ENCODE measurements at regions of chr11 and their contacts with region 1.

Region 1: GRCh38 chr11:2298795-2299761 is 2.6 kb downstream of the C11orf21 start:
- DNase-seq: peak in 6 of 9 experiments; percentile 45 to 75 (median 66)
- ATAC-seq: peak; percentile 51
- H3K4me3 ChIP-seq: peak overlapping the region; percentile 43 to 85
- H3K4me3 Mint-ChIP-seq: peak overlapping the region; percentile 90
- H3K27ac ChIP-seq: peak overlapping the region; percentile 80 to 81
- H3K27ac Mint-ChIP-seq: peak overlapping the region; percentile 92
- H3K4me1 ChIP-seq: peaks cover 47% of the 10 kb centered on the region
- H3K4me1 Mint-ChIP-seq: peaks cover 64% of the 10 kb centered on the region
- H3K27me3 ChIP-seq: no peaks in the 10 kb centered on the region
- H3K27me3 Mint-ChIP-seq: no peaks in the 10 kb centered on the region
- CTCF ChIP-seq: no peak

Region 2: DNA sequence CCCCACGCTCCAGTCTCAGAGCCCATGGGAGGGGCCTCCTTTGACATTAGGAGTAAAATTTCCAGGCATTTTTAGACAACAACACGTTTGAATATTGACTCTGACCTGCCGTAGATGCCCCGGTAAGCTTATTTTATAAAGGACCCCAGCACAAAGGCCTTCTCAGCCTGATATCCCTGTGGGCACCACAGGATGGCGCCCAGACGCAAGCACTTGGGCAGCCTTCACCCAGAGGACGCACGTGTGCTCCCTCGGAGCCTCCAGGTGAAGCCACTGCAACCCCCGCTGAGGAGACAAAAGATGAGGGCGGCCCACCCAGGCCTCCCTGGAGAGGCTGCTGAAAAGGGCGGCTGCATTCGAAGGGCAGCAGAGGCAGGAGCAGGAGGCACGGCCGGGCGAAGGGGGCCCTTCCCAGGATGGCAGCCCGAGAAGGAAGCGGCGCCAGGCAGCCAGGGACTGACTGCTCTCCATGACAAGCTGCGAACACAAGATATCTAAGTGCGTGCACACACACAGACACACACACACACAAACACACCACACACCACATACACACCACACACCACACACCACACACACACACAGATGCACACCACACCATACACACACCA is 112.3 kb before region 1 on chr11:
- CTCF ChIA-PET with region 1: interaction called, 65 read pairs
- POLR2A ChIA-PET with region 1: no interaction called
- intact Hi-C with region 1: loop called in 1 of 2 experiments (anchors 1 kb)
- DNase-seq: peak; percentile 32 to 78 (median 52)
- ATAC-seq: peak; percentile 97
- H3K4me3 ChIP-seq: no peak overlapping the region
- H3K4me3 Mint-ChIP-seq: no peak overlapping the region
- H3K27ac ChIP-seq: no peak overlapping the region
- H3K27ac Mint-ChIP-seq: no peak overlapping the region
- H3K4me1 ChIP-seq: peaks cover 5% of the 10 kb centered on the region
- H3K4me1 Mint-ChIP-seq: peaks cover 5% of the 10 kb centered on the region
- H3K27me3 ChIP-seq: peaks cover 0 to 10% of the 10 kb centered on the region in 2 experiments
- H3K27me3 Mint-ChIP-seq: peaks cover 14% of the 10 kb centered on the region
- CTCF ChIP-seq: peak; percentile 67

Region 3: DNA sequence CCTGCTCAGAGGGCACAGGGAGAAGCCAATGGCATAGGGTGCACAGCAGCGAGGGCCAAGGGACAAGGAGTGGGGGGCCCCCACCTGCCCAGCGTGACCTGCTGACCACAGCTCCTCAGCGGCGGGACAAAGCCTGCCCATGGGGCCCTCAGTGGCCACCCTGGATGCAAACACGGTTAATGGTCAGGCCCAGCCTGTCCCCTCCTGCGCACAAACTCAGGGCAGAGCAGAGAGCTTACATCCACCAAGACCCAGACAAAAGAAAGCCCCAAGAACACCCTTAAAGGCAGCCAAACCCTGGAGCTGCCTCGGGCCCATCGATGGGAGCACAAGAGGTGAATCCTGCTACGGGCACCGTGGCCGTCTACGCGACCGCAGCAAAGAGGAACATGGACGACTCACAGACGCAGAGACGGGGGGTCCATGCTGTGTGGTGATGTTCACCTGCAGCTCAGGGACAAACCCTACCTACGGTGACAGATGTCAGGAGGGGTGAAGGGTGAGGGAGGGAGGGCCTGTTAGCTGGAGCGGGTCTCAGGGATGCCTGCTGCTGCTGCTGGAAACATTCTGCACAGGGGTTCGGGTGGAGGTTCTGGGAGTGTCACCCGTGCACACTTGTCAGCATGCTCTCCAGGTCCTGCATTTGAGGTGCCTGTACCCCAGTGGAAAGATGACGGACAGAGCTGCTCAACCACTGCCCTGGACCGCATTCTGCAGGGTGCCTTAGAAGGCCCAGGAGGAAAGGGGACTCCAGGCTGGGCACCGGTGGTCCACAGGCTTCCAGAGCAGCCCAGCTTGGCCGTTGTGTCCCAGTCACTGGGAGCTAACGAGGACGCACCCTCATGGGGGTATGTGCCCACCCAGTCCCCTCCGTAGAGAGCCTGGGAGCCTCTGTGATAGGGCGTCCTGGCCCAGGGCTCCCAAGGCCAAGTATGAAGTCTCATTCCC is 40.3 kb before region 1 on chr11:
- CTCF ChIA-PET with region 1: no interaction called
- POLR2A ChIA-PET with region 1: no interaction called
- intact Hi-C with region 1: no loop called
- DNase-seq: peak in 2 of 9 experiments; percentile 8 to 40
- ATAC-seq: no peak
- H3K4me3 ChIP-seq: no peak overlapping the region
- H3K4me3 Mint-ChIP-seq: no peak overlapping the region
- H3K27ac ChIP-seq: no peak overlapping the region
- H3K27ac Mint-ChIP-seq: no peak overlapping the region
- H3K4me1 ChIP-seq: no peaks in the 10 kb centered on the region
- H3K4me1 Mint-ChIP-seq: no peaks in the 10 kb centered on the region
- H3K27me3 ChIP-seq: no peaks in the 10 kb centered on the region
- H3K27me3 Mint-ChIP-seq: no peaks in the 10 kb centered on the region
- CTCF ChIP-seq: no peak

Region 4: DNA sequence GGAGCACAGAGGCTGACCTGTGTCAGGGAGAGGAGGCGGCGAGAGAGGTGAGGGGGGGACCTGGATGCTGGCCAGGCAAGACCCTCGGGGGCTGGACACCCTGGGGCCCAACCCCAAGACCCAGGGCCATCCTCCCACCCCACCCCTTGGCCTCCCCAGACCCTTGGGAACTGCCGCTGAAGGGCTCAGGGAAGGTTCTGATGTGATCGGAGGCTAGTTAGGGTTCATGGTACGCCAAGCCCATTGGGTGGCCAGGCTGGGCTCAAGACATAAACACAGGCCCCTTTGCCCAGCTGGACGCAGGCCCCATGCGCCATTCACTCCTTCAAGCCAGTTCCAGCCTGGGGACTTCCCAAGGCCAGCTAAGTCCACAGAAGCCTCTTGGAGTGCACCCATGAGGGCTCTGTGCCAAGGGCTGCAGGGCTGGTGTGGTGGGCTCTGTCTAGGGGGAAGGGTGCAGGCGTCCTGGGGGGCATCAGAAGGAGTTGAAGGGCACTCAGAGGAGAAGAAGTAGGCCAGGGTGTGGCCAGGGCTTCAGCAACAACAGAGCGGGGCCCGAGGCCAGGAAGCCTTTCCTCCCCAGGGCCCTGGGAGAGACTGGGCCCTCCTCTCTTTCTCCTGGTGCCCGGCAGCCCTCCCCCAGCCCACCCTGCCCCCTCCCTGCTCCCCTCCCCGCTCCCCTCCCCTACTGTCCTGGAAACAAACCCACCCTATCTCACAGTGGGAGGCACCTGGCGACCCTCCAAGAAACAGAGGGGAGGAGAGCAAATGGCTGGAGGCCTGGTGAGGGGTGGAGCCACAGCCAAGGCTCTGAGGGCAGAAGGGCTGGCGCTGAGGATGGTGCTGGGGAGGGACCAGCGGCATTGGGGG is 15.7 kb after region 1 on chr11:
- CTCF ChIA-PET with region 1: interaction called, 30 read pairs
- POLR2A ChIA-PET with region 1: interaction called, 48 read pairs
- intact Hi-C with region 1: no loop called
- DNase-seq: peak in 1 of 9 experiments; percentile 7
- ATAC-seq: no peak
- H3K4me3 ChIP-seq: no peak overlapping the region
- H3K4me3 Mint-ChIP-seq: no peak overlapping the region
- H3K27ac ChIP-seq: no peak overlapping the region
- H3K27ac Mint-ChIP-seq: peak overlapping the region; percentile 60
- H3K4me1 ChIP-seq: peaks cover 41% of the 10 kb centered on the region
- H3K4me1 Mint-ChIP-seq: peaks cover 25% of the 10 kb centered on the region
- H3K27me3 ChIP-seq: no peaks in the 10 kb centered on the region
- H3K27me3 Mint-ChIP-seq: no peaks in the 10 kb centered on the region
- CTCF ChIP-seq: no peak